Dendritic cell treated with granulocyte-macrophage colony-stimulating factor and Interleukin-4, amounts not matched to agents 40 ng/mL and 50 ng/mL, for 4 days (primary cell): ENCODE measurements at regions of chr16 and their contacts with region 1.

Region 1: DNA sequence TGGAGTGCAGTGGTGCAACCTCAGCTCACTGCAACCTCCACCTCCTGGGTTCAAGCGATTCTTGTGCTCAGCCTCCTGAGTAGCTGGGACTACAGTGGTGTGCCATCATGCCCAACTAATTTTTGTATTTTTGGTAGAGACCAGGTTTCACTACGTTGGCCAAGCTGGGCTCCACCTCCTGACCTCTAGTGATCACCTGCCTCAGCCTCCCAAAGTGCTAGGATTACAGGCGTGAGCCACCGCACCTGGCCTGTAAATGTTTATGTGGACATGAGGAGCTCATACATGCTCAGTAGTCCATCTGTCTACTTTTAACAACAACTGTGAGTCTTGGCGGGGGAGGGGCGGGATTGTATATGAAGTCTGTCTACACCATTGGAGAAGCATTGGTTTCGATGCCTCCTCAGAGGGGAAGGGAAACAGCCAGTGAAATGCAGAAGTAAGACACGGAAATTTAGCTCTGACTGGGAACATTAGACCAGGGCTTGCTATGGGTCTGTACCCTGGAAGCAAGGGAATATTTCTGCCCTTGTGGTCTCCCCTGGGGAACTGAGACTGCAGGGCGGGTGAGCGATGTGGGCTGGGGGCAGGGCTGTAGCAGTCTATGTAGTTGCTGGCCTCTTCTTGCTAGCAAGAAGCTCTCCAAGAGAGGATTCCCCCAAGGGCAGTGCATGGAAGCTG is 9.3 kb downstream of the NUBP1 start:
- H3K4me3 Mint-ChIP-seq: peak overlapping the region; percentile 58
- H3K27ac Mint-ChIP-seq: peak overlapping the region; percentile 96
- H3K4me1 Mint-ChIP-seq: peaks cover 96% of the 10 kb centered on the region
- H3K27me3 Mint-ChIP-seq: no peaks in the 10 kb centered on the region

Region 2: GRCh38 chr16:10918294-10919002 is 165.5 kb after region 1 on chr16:
- intact Hi-C with region 1: loop called (anchors 5 kb)
- H3K4me3 Mint-ChIP-seq: no peak overlapping the region
- H3K27ac Mint-ChIP-seq: peak overlapping the region; percentile 87
- H3K4me1 Mint-ChIP-seq: peaks cover 85% of the 10 kb centered on the region
- H3K27me3 Mint-ChIP-seq: no peaks in the 10 kb centered on the region